Mammary epithelial cell (primary cell): ENCODE measurements at regions of chr10 and their contacts with region 1.

Region 1: GRCh38 chr10:58152673-58153263 is 114.9 kb downstream of the IPMK start:
- DNase-seq: peak; percentile 52
- H3K4me3 ChIP-seq: no peak overlapping the region
- H3K27ac ChIP-seq: no peak overlapping the region
- H3K4me1 ChIP-seq: peaks cover 9% of the 10 kb centered on the region
- H3K27me3 ChIP-seq: peaks cover 4% of the 10 kb centered on the region
- CTCF ChIP-seq: peak; percentile 72 to 74

Region 2: GRCh38 chr10:57338823-57339558 is 813.8 kb before region 1 on chr10:
- CTCF ChIA-PET with region 1: no interaction called
- dilution Hi-C with region 1: no loop called
- in situ Hi-C with region 1: no loop called
- intact Hi-C with region 1: loop called (anchors 10 kb)
- DNase-seq: peak; percentile 12
- H3K4me3 ChIP-seq: no peak overlapping the region
- H3K27ac ChIP-seq: no peak overlapping the region
- H3K4me1 ChIP-seq: no peaks in the 10 kb centered on the region
- H3K27me3 ChIP-seq: no peaks in the 10 kb centered on the region
- CTCF ChIP-seq: peak; percentile 52 to 70

Region 3: GRCh38 chr10:57579926-57580325 is 572.8 kb before region 1 on chr10:
- CTCF ChIA-PET with region 1: no interaction called
- dilution Hi-C with region 1: no loop called
- in situ Hi-C with region 1: no loop called
- intact Hi-C with region 1: loop called (anchors 1 kb)
- DNase-seq: peak; percentile 27
- H3K4me3 ChIP-seq: no peak overlapping the region
- H3K27ac ChIP-seq: no peak overlapping the region
- H3K4me1 ChIP-seq: no peaks in the 10 kb centered on the region
- H3K27me3 ChIP-seq: peaks cover under 1% of the 10 kb centered on the region
- CTCF ChIP-seq: peak; percentile 37 to 75

Region 4: DNA sequence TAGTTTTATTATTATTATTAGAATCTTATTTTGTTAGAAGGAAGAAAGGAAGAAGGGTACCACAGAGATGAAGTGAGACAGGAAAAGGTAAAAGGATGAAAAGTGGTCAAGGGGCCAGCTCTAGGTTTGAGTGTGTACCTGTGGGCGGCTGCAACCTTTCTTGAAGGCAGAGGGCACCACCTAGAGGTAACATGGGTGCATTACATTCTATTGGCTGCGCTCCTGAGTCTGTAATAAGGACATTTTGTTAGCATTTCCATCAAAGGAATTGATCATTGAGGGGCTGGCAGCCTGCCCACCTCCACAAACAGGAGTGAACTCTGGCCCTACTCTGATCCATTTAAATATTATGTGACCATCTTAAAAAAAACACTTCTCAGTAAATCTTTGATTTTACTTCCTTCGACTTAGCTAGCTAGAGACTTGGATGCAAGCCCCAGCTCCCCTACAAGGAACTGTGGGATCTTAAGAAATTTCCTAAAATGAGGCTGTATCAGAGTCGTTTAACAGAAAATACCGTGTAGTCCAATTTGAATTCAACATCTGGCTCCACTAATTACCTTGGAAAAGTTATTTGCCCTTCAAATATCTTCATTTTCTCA is 495.5 kb before region 1 on chr10:
- CTCF ChIA-PET with region 1: no interaction called
- dilution Hi-C with region 1: no loop called
- in situ Hi-C with region 1: no loop called
- intact Hi-C with region 1: loop called (anchors 5 kb)
- DNase-seq: peak; percentile 30
- H3K4me3 ChIP-seq: no peak overlapping the region
- H3K27ac ChIP-seq: no peak overlapping the region
- H3K4me1 ChIP-seq: no peaks in the 10 kb centered on the region
- H3K27me3 ChIP-seq: peaks cover 2% of the 10 kb centered on the region
- CTCF ChIP-seq: peak; percentile 80 to 87

Region 5: DNA sequence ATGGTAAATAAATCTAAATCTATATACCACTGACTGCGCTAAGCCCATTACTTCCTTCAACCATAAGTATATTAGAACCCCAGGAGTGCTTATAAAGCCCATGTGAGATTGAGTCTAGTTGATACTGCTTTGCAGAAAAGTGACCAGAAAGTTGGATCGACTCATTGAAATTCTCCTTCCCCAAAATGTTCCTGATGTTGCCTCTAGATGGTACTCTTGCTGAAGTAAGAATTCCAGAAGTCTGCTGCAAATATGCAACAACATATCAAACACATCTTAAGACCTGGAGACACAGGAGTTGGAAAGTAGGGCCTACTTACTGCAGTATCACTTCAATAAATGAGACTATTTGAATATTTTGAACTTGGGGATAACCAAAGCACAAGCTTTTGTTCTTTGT is 435.9 kb before region 1 on chr10:
- CTCF ChIA-PET with region 1: no interaction called
- dilution Hi-C with region 1: no loop called
- in situ Hi-C with region 1: loop called in 1 of 2 experiments (anchors 25 kb)
- intact Hi-C with region 1: loop called (anchors 1 kb)
- DNase-seq: peak; percentile 45
- H3K4me3 ChIP-seq: no peak overlapping the region
- H3K27ac ChIP-seq: no peak overlapping the region
- H3K4me1 ChIP-seq: no peaks in the 10 kb centered on the region
- H3K27me3 ChIP-seq: no peaks in the 10 kb centered on the region
- CTCF ChIP-seq: peak; percentile 56 to 75

Region 6: GRCh38 chr10:57849691-57850357 is 302.9 kb before region 1 on chr10:
- CTCF ChIA-PET with region 1: no interaction called
- dilution Hi-C with region 1: no loop called
- in situ Hi-C with region 1: no loop called
- intact Hi-C with region 1: loop called (anchors 2 kb)
- DNase-seq: peak; percentile 13
- H3K4me3 ChIP-seq: no peak overlapping the region
- H3K27ac ChIP-seq: no peak overlapping the region
- H3K4me1 ChIP-seq: no peaks in the 10 kb centered on the region
- H3K27me3 ChIP-seq: no peaks in the 10 kb centered on the region
- CTCF ChIP-seq: peak; percentile 50 to 53